ENCODE measurements at regions of chr3 and their contacts with region 1.

Region 1: GRCh38 chr3:151227807-151228665 is 25.0 kb upstream of the GPR171 start:
- DNase-seq: peak; percentile 88
- H3K4me3 Mint-ChIP-seq: no peak overlapping the region
- H3K27ac Mint-ChIP-seq: peak overlapping the region; percentile 83
- H3K4me1 Mint-ChIP-seq: peaks cover 73% of the 10 kb centered on the region
- H3K27me3 Mint-ChIP-seq: peaks cover 2% of the 10 kb centered on the region

Region 2: DNA sequence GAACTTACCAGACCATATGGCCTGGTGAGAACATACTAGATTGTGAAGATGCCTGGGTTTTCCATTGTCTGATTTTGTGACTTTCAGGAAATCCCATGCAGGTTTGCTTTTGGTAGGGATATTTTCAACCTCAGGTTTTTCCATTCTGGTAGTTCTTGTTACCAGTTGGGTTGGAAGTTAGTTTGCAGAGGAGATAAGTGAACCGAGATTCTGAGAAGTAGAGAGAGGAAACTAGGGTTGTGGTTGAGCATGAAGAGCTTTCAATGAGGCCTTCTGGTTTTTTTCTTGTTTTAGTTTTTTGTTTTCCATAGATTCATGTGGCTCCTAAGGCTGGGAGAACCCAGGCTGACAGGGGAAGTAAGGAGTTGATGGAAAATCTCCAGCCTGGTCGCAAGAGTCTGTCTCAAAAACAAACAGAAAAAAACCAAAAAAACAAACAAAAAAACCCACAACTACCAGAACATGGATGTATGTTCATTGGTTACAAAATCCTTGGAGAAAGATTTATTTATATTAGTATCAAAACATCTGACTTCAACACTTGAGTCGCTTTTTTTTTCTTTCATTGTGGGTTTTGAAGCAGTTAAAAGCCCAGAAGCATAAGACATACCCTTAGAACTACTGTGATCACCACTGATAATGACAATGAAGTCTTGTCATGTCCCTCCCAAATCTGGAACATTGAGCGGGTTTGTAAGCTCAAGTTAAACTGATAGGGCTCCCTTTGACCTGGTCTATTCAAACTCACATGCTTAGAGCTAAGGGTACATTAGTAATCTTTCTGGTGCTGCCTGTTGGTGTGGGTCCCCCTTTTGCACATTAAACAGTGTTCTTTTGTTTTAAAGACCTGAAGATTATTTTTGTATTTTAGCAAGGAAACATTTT is 28.2 kb before region 1 on chr3:
- CTCF ChIA-PET with region 1: interaction called, 10 read pairs
- DNase-seq: no peak
- H3K4me3 Mint-ChIP-seq: peak overlapping the region; percentile 88
- H3K27ac Mint-ChIP-seq: peak overlapping the region; percentile 98
- H3K4me1 Mint-ChIP-seq: peaks cover 46% of the 10 kb centered on the region
- H3K27me3 Mint-ChIP-seq: no peaks in the 10 kb centered on the region

Region 3: GRCh38 chr3:151210676-151211381 is 17.2 kb before region 1 on chr3:
- CTCF ChIA-PET with region 1: interaction called, 32 read pairs
- DNase-seq: peak; percentile 43
- H3K4me3 Mint-ChIP-seq: peak overlapping the region; percentile 61
- H3K27ac Mint-ChIP-seq: peak overlapping the region; percentile 89
- H3K4me1 Mint-ChIP-seq: peaks cover 59% of the 10 kb centered on the region
- H3K27me3 Mint-ChIP-seq: peaks cover 6% of the 10 kb centered on the region

Region 4: DNA sequence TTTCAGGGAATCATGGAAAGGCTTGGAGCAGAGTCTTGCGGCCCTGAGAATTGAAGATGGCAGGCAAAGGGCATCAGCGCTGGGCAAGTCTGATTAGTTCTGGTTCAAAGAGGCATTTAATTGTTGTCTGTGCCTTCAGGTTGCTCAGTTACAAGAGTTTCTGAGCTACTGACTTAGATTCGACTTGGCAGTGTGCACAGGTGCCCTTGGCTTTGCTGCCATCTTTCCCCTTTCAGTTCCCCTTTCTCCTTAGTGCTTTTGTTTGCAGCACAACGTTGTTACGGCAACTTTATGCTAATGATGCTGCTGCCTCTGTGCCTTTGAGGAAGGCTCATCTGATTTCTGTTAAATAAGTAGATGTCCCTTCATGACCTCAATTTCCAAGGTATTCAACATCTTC is 37.8 kb after region 1 on chr3:
- CTCF ChIA-PET with region 1: interaction called, 31 read pairs
- DNase-seq: no peak
- H3K4me3 Mint-ChIP-seq: no peak overlapping the region
- H3K27ac Mint-ChIP-seq: no peak overlapping the region
- H3K4me1 Mint-ChIP-seq: peaks cover 24% of the 10 kb centered on the region
- H3K27me3 Mint-ChIP-seq: peaks cover 12% of the 10 kb centered on the region

Region 5: GRCh38 chr3:151282921-151283320 is 54.9 kb after region 1 on chr3:
- CTCF ChIA-PET with region 1: interaction called, 201 read pairs
- DNase-seq: no peak
- H3K4me3 Mint-ChIP-seq: no peak overlapping the region
- H3K27ac Mint-ChIP-seq: peak overlapping the region; percentile 72
- H3K4me1 Mint-ChIP-seq: peaks cover 51% of the 10 kb centered on the region
- H3K27me3 Mint-ChIP-seq: no peaks in the 10 kb centered on the region

Region 6: DNA sequence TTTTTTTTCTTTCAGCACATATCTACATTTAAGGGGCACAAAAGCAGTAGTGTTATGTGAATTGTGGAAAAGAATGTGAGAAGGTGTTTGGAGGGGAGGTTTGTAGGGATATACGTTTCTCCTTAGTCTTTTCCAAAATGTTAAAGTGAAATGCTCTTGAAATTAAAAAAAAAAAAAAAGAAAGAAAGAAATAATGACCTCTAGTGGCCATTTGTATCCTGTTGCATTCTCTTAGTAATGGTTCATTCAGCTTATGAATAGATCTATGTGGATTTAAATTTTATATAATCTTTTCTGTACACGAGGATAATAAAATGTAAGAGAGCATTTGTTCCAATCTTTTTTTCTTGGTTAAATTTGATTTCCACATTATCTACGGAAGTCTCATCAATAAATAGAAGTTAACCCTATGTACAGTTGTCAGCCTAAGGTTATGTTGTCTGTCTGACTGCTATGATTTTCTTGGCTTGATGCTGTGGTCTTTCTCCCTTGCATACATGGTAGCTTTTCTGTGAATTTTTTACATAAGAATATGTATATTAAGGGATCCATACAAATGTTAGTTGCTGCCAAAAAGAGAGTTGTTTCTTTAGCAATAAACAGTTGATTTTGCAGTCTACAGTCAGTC is 99.6 kb after region 1 on chr3:
- CTCF ChIA-PET with region 1: interaction called, 19 read pairs
- DNase-seq: no peak
- H3K4me3 Mint-ChIP-seq: no peak overlapping the region
- H3K27ac Mint-ChIP-seq: no peak overlapping the region
- H3K4me1 Mint-ChIP-seq: peaks cover 7% of the 10 kb centered on the region
- H3K27me3 Mint-ChIP-seq: peaks cover 8% of the 10 kb centered on the region

Region 7: DNA sequence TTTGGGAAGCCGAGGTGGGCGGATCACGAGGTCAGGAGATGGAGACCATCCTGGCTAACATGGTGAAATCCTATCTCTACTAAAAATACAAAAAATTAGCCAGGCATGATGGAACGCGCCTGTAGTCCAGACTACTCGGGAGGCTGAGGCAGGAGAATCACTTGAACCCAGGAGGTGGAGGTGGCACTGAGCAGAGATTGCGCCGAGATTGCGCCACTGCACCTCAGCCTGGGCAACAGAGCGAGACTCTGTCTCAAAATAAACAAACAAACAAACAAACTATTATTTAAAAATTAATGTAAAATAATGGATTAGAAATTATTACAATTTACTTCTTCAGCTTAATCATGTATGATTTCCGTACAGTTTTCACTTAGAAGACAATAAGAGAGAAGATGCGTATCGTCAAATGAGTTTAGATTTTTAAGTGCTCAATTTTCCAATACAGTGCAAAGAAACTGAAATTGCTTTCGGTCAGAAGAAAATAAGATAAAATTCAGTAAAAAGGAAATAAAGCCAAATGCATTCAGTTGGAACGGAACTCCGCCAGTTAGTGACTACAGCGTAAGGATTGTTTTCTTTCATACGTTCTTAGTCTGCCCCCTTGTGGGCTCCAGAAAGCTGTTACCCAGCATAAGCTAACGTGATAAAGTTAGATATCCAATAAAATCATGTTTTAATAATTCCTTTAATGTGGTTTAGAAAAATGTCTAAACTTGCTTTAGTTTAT is 610.7 kb after region 1 on chr3:
- CTCF ChIA-PET with region 1: interaction called, 19 read pairs
- DNase-seq: peak; percentile 47
- H3K4me3 Mint-ChIP-seq: no peak overlapping the region
- H3K27ac Mint-ChIP-seq: no peak overlapping the region
- H3K4me1 Mint-ChIP-seq: no peaks in the 10 kb centered on the region
- H3K27me3 Mint-ChIP-seq: peaks cover 28% of the 10 kb centered on the region

Measured in activated naive CD4-positive, alpha-beta T cell treated with anti-CD3 and anti-CD28 coated beads, Interleukin-2, amount 10 ng/mL, durations not matched to agents 7 days and 5 days (primary cell).